PC-3 (cell line): ENCODE measurements at regions of chr11 and their contacts with region 1.

Region 1: DNA sequence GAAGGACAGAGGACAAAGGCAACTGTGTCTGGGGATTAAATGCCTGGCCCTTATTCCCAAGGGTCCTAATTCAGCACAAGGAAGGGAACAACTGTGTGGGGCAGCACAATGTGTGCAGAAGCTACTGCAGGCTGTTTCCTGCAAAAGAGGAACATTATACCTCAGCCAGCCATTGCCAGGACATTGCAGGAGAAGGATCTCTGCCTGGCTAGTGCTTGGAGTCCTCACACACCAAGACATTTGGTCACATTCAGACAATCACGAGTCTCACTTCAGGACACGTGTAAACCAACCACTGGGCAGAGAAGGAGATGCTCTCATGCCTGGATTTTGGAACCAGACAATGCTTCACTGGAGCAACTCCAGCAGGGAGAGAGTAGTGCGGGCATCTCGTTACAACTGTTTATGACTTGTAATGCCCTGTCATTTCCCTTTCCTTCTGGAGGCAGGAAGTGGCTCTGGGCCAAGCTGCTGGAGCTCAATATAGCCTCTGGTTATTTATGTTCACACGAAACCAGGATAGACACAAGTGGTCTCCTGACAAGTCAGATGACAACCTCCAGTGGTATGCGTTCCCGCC is 23.9 kb upstream of the ZC3H12C start:
- DNase-seq: peak; percentile 100
- ATAC-seq: peak; percentile 88
- H3K4me3 ChIP-seq: no peak overlapping the region
- H3K27ac ChIP-seq: peak overlapping the region; percentile 93
- H3K4me1 ChIP-seq: peaks cover 53% of the 10 kb centered on the region
- H3K27me3 ChIP-seq: no peaks in the 10 kb centered on the region
- CTCF ChIP-seq: no peak

Region 2: DNA sequence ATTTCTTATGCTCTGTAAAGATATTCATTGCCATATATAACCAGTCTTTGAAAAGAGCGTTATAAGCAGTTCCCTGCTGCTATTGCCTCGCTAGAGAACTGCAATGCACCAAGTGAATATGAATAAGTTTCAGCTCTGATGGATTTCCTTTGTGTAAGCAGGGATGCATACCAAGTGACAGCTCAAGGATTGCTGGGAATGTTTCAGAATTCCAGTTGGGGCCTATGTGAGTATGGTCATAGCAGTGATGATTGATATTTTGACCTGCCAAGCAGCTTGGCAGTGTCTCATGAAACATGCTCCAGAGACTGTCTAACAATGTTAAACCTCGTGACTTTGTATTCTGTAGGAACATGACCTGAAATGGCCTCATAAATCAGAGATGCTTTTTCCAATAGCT is 334.7 kb before region 1 on chr11:
- CTCF ChIA-PET with region 1: no interaction called
- POLR2A ChIA-PET with region 1: no interaction called
- intact Hi-C with region 1: loop called (anchors 10 kb)
- DNase-seq: no peak
- ATAC-seq: no peak
- H3K4me3 ChIP-seq: no peak overlapping the region
- H3K27ac ChIP-seq: no peak overlapping the region
- H3K4me1 ChIP-seq: peaks cover 8% of the 10 kb centered on the region; the same call in 1 of the 2 replicates
- H3K27me3 ChIP-seq: peaks cover 17% of the 10 kb centered on the region; the same call in 1 of the 2 replicates
- CTCF ChIP-seq: no peak

Region 3: DNA sequence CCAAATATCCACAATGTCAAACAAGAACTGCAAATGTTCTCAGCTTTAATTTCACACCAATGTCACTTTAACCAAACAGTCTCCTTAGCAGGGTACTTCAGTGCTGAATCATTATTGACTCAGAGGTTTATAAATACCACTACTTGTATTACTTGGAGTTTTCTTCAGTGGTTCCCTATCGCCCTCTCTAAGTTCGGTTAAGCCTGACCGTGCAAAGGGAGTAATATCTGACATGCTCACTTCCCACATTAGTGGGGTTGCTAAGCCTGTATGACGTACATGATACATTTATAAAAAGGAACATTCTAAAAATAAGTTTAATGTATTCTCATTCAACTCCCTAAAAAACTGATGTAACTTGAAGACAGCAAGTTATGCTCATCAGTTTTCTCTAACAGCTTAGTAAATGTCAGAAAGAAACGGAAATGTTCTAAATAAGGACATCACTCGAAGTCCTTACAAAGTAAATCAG is 69.2 kb before region 1 on chr11:
- CTCF ChIA-PET with region 1: no interaction called
- POLR2A ChIA-PET with region 1: no interaction called
- intact Hi-C with region 1: loop called (anchors 5 kb)
- DNase-seq: peak; percentile 93
- ATAC-seq: peak; percentile 99
- H3K4me3 ChIP-seq: no peak overlapping the region
- H3K27ac ChIP-seq: peak overlapping the region; percentile 86
- H3K4me1 ChIP-seq: peaks cover 33% of the 10 kb centered on the region
- H3K27me3 ChIP-seq: no peaks in the 10 kb centered on the region
- CTCF ChIP-seq: no peak